Activated CD4-positive, alpha-beta memory T cell treated with anti-CD3 and anti-CD28 coated beads for 36 hours (primary cell): ENCODE measurements at regions of chrX and their contacts with region 1.

Region 1: DNA sequence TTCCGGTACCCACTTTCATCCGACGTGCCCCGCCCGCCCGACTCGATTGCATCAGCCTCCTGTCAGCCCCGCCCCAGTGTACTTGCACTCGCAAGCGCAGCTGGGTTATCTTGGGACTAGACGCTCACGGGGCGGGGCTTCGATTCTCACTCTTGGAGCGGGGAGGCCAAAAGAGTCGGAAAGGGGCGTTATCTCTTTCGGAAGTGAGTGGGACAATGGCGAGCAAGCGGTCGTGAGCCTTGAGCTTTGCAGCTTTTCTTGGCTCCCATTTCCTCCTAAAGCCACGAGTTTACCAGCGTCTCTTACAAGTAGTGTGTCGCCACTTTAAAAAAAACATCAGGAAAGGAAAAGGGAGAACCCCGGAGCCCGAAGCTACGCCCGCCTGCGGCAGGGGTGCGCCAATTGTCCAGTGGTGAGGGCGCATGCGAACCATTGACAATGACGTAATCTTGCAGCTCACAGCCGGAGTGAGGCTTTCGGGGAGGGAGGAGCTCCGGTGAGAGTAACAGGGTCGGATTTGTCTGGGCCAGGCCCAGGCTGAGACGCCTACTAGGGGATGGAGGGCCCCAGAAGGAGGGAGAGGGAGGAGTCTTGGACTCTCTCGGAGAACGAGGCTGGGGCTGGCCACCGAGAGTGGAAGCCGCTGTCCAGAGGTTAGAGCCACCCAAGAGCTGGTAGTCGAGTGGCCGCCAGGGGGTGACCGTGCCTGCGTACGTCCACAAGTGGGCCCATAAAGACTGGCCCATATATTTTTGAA is 109.5 kb downstream of the GNL3L start:
- DNase-seq: peak; percentile 95
- H3K4me3 Mint-ChIP-seq: peak overlapping the region; percentile 90
- H3K27ac Mint-ChIP-seq: peak overlapping the region; percentile 99
- H3K4me1 Mint-ChIP-seq: peaks cover 5% of the 10 kb centered on the region
- H3K27me3 Mint-ChIP-seq: no peaks in the 10 kb centered on the region

Region 2: DNA sequence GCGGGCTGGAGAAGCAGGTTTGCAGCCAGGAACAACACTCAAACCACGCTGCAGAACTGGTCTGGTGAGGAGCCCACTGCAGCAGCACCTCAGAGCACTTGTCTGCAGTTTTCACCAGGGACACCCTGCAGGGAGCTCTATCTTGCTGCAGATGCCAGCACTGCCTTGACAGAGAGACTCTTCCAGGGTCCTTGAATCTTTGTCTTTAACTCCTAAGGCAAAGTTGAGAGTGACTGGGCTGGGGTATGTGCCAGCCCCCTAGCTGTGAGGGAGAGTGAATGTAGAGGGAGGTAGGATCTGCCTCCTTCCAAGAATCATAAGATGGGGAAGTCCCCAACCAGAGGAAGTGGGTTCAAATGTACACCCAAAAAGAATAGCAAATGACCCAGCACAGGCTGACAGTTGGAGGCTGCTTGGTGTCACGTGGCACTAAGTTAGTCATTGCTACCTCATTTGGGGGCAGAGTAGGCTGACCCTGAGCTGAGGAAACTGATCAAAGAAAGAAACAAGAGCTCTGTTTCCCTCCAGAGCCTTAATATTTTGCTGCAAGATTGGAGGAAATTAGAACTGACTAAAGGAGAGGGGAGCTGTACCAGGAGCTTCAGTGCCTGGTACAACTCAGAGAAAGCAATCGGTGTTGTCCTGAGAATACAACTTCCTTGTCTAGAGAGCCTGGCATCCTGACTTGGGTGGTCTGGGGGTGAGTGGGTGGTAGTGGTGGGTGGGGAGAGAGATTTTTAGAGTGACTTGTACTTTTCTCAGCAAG is 924.8 kb before region 1 on chrX:
- CTCF ChIA-PET with region 1: no interaction called
- POLR2A ChIA-PET with region 1: no interaction called
- intact Hi-C with region 1: loop called (anchors 5 kb)
- DNase-seq: peak; percentile 78
- H3K4me3 Mint-ChIP-seq: peak overlapping the region; percentile 93
- H3K27ac Mint-ChIP-seq: peak overlapping the region; percentile 100
- H3K4me1 Mint-ChIP-seq: peaks cover 36% of the 10 kb centered on the region
- H3K27me3 Mint-ChIP-seq: no peaks in the 10 kb centered on the region

Region 3: DNA sequence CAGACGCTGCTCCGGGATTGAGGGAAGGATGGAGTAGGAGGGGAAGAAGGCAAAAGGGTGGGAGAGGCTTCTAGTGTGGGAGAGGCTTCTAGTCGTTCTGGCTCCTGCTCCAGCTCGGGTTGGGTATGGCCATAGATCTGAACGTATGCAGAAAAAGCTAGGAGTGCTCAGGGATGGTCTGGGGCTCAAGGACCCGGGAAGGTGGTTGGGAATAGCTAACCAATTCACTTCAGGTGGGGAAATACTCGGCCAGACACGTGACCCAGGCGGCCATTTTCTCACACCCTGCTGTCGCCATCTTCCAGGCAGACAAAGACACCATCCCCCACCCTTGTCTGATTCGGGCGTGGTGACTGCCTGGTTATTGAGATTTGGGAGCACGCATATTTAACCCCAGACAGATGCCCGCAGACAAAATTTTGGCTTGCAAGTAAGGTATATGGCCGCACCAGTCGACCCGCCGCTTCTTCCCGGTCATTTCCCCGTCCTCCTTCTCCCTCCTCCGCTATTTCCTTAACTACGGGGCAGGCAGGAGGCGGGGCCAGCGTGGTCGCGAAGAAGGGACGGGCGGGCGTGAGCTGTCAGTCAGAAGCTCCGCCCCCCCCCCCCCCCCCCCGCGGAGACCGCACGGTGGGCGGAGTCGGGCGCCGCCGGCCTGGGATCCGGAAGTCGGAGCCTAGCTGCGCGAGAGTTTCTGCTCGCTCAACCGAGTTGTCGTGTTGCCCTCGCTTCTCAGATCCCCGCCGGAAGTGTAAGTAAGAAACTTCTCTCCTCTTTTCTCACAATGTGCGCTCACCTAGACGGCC is 109.8 kb before region 1 on chrX and contains the start of gene GNL3L:
- CTCF ChIA-PET with region 1: interaction called, 3 read pairs
- POLR2A ChIA-PET with region 1: interaction called, 9 read pairs
- intact Hi-C with region 1: loop called (anchors 1 kb)
- DNase-seq: peak; percentile 89
- H3K4me3 Mint-ChIP-seq: peak within 1 kb of the TSS; percentile 89
- H3K27ac Mint-ChIP-seq: peak within 1 kb of the TSS; percentile 91
- H3K4me1 Mint-ChIP-seq: peaks cover 36% of the 10 kb centered on the region
- H3K27me3 Mint-ChIP-seq: no peaks in the 10 kb centered on the region
- total RNA-seq, gene GNL3L: 45.8 to 45.9 TPM

Region 4: DNA sequence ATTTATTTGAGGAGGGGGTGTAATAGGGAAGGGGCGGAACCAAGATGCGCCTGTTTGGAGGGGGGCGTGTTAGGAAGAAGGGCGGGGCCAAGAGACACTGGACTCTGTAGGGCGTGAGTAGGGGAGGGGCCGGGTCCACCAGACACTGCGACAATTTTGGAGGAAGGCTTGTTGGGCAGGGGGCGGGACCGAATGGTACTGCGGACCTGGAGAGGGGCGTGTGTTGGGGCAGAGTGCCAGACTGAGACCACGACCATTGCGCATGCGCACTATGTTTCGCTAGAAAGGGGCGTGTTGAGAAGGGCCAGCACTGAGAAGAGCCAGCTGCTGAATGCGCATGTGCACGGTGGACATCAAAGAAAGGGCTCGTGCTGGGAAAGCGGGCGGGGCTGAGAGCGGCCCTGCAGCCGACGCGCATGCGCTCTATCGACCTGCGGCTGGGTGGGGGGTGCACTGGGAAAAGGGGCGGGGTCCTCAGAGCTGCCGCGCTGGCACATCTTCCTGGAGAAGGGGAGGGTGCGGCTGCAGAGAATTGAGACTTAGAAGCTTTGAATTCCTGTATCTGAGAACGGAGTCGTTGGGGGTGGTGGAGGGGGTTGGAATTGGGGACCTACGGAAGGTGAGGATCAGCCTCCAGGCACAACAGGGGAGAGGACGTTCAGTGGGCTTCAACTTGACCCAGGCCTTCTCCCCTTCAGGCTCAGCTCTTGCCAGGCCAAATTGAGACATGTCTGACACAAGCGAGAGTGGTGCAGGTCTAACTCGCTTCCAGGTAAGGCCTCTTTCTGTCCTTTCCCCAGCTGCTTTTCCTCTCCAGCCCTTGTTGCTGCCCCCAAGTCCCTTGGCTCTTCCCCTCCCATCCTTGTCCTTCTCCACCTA is 169.3 kb after region 1 on chrX:
- CTCF ChIA-PET with region 1: no interaction called
- POLR2A ChIA-PET with region 1: interaction called, 4 read pairs
- intact Hi-C with region 1: loop called (anchors 1 kb)
- DNase-seq: peak; percentile 94
- H3K4me3 Mint-ChIP-seq: peak overlapping the region; percentile 90
- H3K27ac Mint-ChIP-seq: peak overlapping the region; percentile 90
- H3K4me1 Mint-ChIP-seq: peaks cover 13% of the 10 kb centered on the region
- H3K27me3 Mint-ChIP-seq: peaks cover 2% of the 10 kb centered on the region

Region 5: DNA sequence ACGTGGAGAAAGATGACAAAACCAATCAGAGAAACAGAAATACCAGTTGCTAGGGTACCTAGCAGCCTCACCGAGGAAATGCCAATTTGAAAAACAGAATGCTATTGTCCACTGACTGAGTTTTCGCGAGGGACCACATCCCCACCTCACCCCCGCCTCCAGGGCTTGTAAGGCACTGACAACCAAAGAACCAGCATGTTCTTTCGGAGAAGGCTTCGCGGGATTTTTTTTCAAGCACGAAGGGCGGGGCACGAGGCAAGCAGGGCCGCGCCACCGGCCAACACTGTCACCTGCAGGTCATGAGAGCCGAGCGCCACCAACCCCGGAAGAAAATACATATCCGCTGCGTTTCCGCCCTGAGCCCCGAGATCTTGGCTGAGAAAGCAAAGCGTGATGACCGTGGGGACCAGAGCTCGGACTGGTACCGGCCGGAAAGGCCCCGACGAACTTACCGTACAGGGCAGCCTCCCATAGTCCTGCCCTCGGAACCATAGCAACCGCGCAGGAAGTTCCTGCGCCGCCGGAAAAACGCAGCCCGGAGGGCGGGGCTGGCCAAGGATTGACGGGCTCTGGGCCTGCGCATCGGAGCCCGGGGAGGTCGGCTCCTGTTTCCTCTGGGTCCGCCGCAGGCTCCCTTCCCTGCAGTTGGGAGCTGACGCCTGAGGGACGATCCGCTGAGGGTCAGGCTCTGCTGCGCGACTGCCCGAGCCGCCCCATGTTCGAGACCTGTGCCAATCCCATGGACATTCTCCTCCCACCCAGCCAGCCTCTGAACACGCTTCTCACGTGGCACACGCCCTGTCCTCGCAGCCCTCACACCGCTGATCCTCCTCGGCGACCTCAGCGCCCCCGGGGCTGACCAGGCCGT is 521.4 kb after region 1 on chrX:
- CTCF ChIA-PET with region 1: no interaction called
- POLR2A ChIA-PET with region 1: no interaction called
- intact Hi-C with region 1: loop called (anchors 2 kb)
- DNase-seq: peak; percentile 92
- H3K4me3 Mint-ChIP-seq: peak overlapping the region; percentile 83
- H3K27ac Mint-ChIP-seq: peak overlapping the region; percentile 94
- H3K4me1 Mint-ChIP-seq: peaks cover 9% of the 10 kb centered on the region
- H3K27me3 Mint-ChIP-seq: no peaks in the 10 kb centered on the region